B cell (primary cell): ENCODE measurements at regions of chr14 and their contacts with region 1.

Region 1: GRCh38 chr14:102591889-102592763 is at the start of gene RCOR1:
- DNase-seq: peak; percentile 97
- ATAC-seq: peak; percentile 82
- H3K4me3 ChIP-seq: peak within 1 kb of the TSS; percentile 73 to 91 (median 83)
- H3K4me3 Mint-ChIP-seq: peak within 1 kb of the TSS; percentile 89
- H3K27ac ChIP-seq: peak within 1 kb of the TSS; percentile 82 to 95
- H3K27ac Mint-ChIP-seq: peak within 1 kb of the TSS; percentile 97
- H3K4me1 ChIP-seq: peaks cover 10 to 22% of the 10 kb centered on the region in 2 donors
- H3K4me1 Mint-ChIP-seq: peaks cover 26% of the 10 kb centered on the region
- H3K27me3 ChIP-seq: no peaks in the 10 kb centered on the region
- H3K27me3 Mint-ChIP-seq: no peaks in the 10 kb centered on the region
- CTCF ChIP-seq: no peak
- total RNA-seq, gene RCOR1: 37.1 and 38.4 TPM in 2 replicates

Region 2: DNA sequence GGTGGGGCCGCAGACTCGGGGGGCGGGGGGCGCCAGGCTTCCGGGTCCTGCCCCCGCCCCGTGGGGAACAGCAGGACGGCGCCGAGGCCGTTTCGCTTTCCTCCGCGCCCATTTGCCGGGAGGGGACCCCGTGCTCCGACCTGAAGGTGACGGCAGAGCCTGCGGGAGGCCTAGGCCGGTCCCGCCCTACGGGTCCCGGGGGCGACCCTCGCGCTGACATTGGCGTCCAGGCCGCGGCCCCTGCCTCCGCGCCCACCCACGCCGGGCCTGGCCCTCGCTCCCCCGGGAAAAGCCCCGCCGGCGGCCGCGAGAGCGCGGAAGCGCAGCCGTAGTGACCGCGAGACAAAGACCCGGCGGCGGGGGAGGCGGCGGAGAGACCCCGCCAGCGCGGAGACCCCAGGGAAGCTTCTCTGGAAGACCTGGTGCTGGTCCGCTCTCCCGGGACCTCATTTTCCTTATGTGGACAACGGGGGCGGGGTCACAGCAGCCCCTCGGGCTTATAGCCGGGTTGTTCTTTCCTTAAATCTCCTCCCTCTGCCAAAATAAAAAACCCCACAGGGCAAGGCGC is 36.8 kb before region 1 on chr14:
- CTCF ChIA-PET with region 1: interaction called, 3 read pairs
- POLR2A ChIA-PET with region 1: interaction called, 3 read pairs
- intact Hi-C with region 1: loop called (anchors 1 kb)
- DNase-seq: peak; percentile 76
- ATAC-seq: peak; percentile 88
- H3K4me3 ChIP-seq: peak overlapping the region in 4 of 5 experiments; percentile 65 to 84 (median 74)
- H3K4me3 Mint-ChIP-seq: peak overlapping the region; percentile 82
- H3K27ac ChIP-seq: peak overlapping the region; percentile 80 to 86
- H3K27ac Mint-ChIP-seq: peak overlapping the region; percentile 72
- H3K4me1 ChIP-seq: peaks cover 9 to 22% of the 10 kb centered on the region in 2 donors
- H3K4me1 Mint-ChIP-seq: peaks cover 7% of the 10 kb centered on the region
- H3K27me3 ChIP-seq: peaks cover 0 to 3% (median 0%) of the 10 kb centered on the region in 4 experiments
- H3K27me3 Mint-ChIP-seq: peaks cover under 1% of the 10 kb centered on the region
- CTCF ChIP-seq: no peak

Region 3: GRCh38 chr14:102624666-102625065 is 32.5 kb after region 1 on chr14:
- CTCF ChIA-PET with region 1: interaction called, 12 read pairs
- POLR2A ChIA-PET with region 1: interaction called, 5 read pairs
- intact Hi-C with region 1: no loop called
- DNase-seq: no peak
- ATAC-seq: no peak
- H3K4me3 ChIP-seq: no peak overlapping the region
- H3K4me3 Mint-ChIP-seq: no peak overlapping the region
- H3K27ac ChIP-seq: no peak overlapping the region
- H3K27ac Mint-ChIP-seq: no peak overlapping the region
- H3K4me1 ChIP-seq: peaks cover 15% of the 10 kb centered on the region in 2 donors
- H3K4me1 Mint-ChIP-seq: peaks cover 72% of the 10 kb centered on the region
- H3K27me3 ChIP-seq: no peaks in the 10 kb centered on the region
- H3K27me3 Mint-ChIP-seq: no peaks in the 10 kb centered on the region
- CTCF ChIP-seq: no peak

Region 4: GRCh38 chr14:103091041-103091882 is 499.1 kb after region 1 on chr14:
- CTCF ChIA-PET with region 1: interaction called, 3 read pairs
- POLR2A ChIA-PET with region 1: no interaction called
- intact Hi-C with region 1: loop called (anchors 5 kb)
- DNase-seq: peak; percentile 87
- ATAC-seq: peak; percentile 97
- H3K4me3 ChIP-seq: peak overlapping the region in 4 of 5 experiments; percentile 24 to 56 (median 48)
- H3K4me3 Mint-ChIP-seq: peak overlapping the region; percentile 74
- H3K27ac ChIP-seq: no peak overlapping the region
- H3K27ac Mint-ChIP-seq: no peak overlapping the region
- H3K4me1 ChIP-seq: peaks cover 10 to 15% of the 10 kb centered on the region in 2 donors
- H3K4me1 Mint-ChIP-seq: peaks cover 2% of the 10 kb centered on the region
- H3K27me3 ChIP-seq: peaks cover 0 to 21% (median 1%) of the 10 kb centered on the region in 4 experiments
- H3K27me3 Mint-ChIP-seq: no peaks in the 10 kb centered on the region
- CTCF ChIP-seq: peak; percentile 83

Region 5: DNA sequence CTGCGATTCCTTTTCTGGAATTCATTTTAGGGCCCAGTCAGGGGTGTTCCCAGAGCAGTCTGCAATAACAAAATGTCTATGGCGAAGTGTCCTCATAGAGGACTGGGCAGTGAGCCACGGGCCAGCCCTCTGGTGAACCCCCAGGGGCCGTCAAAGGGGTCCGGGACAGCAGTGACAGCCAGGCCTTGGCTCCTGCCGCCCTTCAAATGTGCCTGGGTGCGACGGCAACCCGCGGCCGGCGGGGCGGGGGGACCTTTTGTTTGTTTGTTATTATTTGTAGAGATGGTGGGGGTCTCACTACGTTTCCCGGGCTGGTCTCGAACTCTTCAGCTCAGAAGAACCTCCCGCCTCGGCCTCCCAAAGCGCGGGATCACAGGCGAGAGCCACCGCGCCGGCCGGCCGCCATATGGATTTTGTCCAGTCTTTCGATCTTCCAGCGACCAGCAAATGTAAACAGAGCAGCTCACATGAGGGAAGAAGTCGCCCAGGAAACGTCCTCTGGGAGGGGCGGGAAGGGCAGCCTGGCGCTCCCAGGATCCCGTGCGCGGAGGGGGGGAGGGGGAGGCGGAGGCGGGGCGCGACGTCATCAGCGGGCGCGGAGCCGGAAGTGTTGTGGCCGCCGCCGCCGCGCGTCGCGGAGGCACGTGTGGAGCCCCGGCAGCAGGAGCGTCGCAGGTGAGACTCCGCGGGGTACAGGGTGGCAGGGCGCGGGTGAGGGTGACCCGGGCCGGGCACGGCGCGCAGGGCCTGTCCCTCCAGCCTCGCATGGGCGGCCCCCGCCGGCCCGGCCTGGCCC is 936.7 kb after region 1 on chr14 and contains the start of gene TRMT61A:
- CTCF ChIA-PET with region 1: no interaction called
- POLR2A ChIA-PET with region 1: no interaction called
- intact Hi-C with region 1: loop called (anchors 5 kb)
- DNase-seq: peak; percentile 85
- ATAC-seq: peak; percentile 42
- H3K4me3 ChIP-seq: peak within 1 kb of the TSS; percentile 53 to 94 (median 86)
- H3K4me3 Mint-ChIP-seq: peak within 1 kb of the TSS; percentile 88
- H3K27ac ChIP-seq: peak within 1 kb of the TSS; percentile 73 to 84
- H3K27ac Mint-ChIP-seq: peak within 1 kb of the TSS; percentile 96
- H3K4me1 ChIP-seq: peaks cover 33 to 49% of the 10 kb centered on the region in 2 donors
- H3K4me1 Mint-ChIP-seq: peaks cover 50% of the 10 kb centered on the region
- H3K27me3 ChIP-seq: peaks cover 0 to under 1% (median under 1%) of the 10 kb centered on the region in 4 experiments
- H3K27me3 Mint-ChIP-seq: no peaks in the 10 kb centered on the region
- CTCF ChIP-seq: no peak
- total RNA-seq, gene TRMT61A: 9.5 and 12.3 TPM in 2 replicates